Right ventricle myocardium superior (tissue), 1 donor: ENCODE measurements at regions of chr4 and their contacts with region 1.

Region 1: GRCh38 chr4:177047070-177047850 is 254.5 kb upstream of the VEGFC start:
- DNase-seq: peak; percentile 47
- ATAC-seq: peak; percentile 86

Region 2: GRCh38 chr4:176377780-176378179 is 669.5 kb before region 1 on chr4:
- intact Hi-C with region 1: loop called (anchors 5 kb)
- DNase-seq: no peak
- ATAC-seq: no peak

Region 3: GRCh38 chr4:176563591-176563990 is 483.7 kb before region 1 on chr4:
- intact Hi-C with region 1: loop called (anchors 5 kb)
- DNase-seq: no peak
- ATAC-seq: peak; percentile 58

Region 4: GRCh38 chr4:176789955-176790354 is 257.3 kb before region 1 on chr4:
- intact Hi-C with region 1: loop called (anchors 5 kb)
- DNase-seq: no peak
- ATAC-seq: peak; percentile 38

Region 5: DNA sequence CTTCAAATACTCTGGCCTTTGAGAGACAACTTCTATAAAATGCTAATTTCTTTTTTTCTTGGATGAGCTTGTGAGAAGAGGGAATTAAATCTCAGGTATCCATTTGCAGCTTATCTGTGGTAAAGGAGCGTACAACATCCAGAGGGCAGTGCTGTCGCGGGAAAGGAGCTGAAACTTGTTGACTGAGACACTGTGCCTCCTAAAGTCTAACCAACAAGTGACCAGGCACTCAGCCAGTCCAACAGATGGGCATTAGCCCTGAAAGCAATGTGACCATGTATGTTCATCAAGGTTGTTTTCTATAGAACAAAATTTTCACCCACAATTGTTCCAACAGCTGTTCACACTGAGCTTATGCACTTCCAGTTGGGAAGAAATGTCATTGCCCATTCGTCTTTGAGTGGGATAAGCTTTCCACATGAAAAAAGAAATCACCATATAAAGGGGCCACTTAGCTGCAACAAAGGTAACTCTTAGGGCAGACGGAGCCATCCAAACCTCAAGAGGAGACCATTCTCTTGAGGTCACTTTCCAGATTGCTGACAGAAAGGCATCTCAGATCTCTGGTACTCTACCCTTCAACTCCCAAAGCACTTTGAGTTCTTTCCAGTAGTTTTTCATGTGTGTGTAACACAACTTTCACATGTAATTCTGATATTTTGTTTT is 17.6 kb after region 1 on chr4:
- intact Hi-C with region 1: no loop called
- DNase-seq: no peak
- ATAC-seq: no peak

Region 6: GRCh38 chr4:177204126-177204525 is 156.9 kb after region 1 on chr4:
- intact Hi-C with region 1: no loop called
- DNase-seq: no peak
- ATAC-seq: no peak

Region 7: GRCh38 chr4:177315767-177316464 is 268.7 kb after region 1 on chr4:
- intact Hi-C with region 1: no loop called
- DNase-seq: no peak
- ATAC-seq: no peak